Naive thymus-derived CD4-positive, alpha-beta T cell (primary cell): ENCODE measurements at regions of chr2 and their contacts with region 1.

Region 1: DNA sequence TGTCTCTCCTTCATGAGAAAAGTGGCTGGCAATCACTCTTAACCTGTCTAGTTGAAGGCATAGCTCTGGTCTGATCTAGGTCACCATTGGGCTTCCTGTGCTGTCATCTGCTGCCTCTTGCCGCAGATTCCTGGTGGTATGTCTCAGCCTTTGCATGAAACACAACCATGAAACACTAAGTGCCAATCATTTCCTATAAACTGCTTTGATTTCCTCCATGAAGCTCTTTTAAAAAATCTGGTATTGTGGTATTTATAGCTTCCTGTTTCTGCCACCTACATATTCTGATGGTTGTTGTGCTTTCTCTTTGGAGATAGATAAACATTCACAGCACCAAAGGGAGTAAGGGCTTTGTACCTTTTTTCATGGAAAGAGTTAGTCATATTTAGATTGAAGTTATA is 120.0 kb upstream of the EPC2 start:
- DNase-seq: peak in 8 of 9 donors; percentile 44 to 93 (median 86)
- ATAC-seq: peak; percentile 94
- H3K4me3 ChIP-seq: peak overlapping the region; percentile 28
- H3K4me3 Mint-ChIP-seq: peak overlapping the region; percentile 56 to 92 (median 76)
- H3K27ac ChIP-seq: peak overlapping the region; percentile 56
- H3K27ac Mint-ChIP-seq: peak overlapping the region; percentile 85 to 98 (median 94)
- H3K4me1 ChIP-seq: peaks cover 46 to 75% of the 10 kb centered on the region in 2 donors
- H3K4me1 Mint-ChIP-seq: peaks cover 58 to 90% (median 88%) of the 10 kb centered on the region in 7 donors
- H3K27me3 ChIP-seq: no peaks in the 10 kb centered on the region
- H3K27me3 Mint-ChIP-seq: no peaks in the 10 kb centered on the region

Region 2: DNA sequence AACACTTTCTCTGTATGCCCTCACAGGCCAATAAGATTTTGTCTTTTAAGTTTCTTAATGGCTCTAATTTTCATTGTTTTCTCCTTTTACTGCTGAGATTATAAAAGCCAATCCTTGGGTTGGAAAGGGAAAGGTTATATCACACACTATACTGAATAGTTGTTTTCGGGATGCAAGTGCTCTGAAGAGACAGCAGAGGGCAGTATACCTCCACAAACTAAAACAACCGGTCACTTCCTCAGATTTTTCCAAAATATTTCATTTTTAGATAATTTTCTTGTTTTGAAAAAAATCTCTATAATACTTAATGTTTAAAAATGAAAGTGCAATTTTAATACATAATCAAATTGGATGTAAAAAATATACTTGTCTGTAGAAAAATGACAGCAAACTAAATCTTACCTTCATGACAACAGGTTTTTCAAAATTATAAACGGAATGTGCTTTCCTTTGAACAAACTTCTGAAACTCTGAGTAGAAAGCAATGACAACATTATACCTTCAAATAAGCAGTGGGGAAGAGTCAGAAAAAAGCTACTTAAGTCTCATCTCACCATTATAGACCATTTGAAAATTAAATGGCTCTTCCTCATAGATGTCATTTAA is 586.7 kb before region 1 on chr2:
- CTCF ChIA-PET with region 1: interaction called, 3 read pairs
- POLR2A ChIA-PET with region 1: no interaction called
- intact Hi-C with region 1: loop called in 1 of 2 experiments (anchors 5 kb)
- DNase-seq: peak in 5 of 9 donors; percentile 25 to 40 (median 34)
- ATAC-seq: peak; percentile 79
- H3K4me3 ChIP-seq: no peak overlapping the region
- H3K4me3 Mint-ChIP-seq: no peak overlapping the region
- H3K27ac ChIP-seq: no peak overlapping the region
- H3K27ac Mint-ChIP-seq: peak overlapping the region in 4 of 9 donors; percentile 26 to 75 (median 42)
- H3K4me1 ChIP-seq: no peaks in the 10 kb centered on the region
- H3K4me1 Mint-ChIP-seq: peaks cover 0 to 2% (median 0%) of the 10 kb centered on the region in 7 donors
- H3K27me3 ChIP-seq: no peaks in the 10 kb centered on the region
- H3K27me3 Mint-ChIP-seq: no peaks in the 10 kb centered on the region

Region 3: GRCh38 chr2:148540022-148540421 is 15.5 kb after region 1 on chr2:
- CTCF ChIA-PET with region 1: interaction called, 6 read pairs
- POLR2A ChIA-PET with region 1: interaction called, 38 read pairs
- intact Hi-C with region 1: loop called (anchors 1 to 2 kb)
- DNase-seq: peak in 4 of 9 donors; percentile 32 to 42 (median 40)
- ATAC-seq: peak; percentile 60
- H3K4me3 ChIP-seq: peak overlapping the region; percentile 10
- H3K4me3 Mint-ChIP-seq: peak overlapping the region; percentile 47 to 78 (median 60)
- H3K27ac ChIP-seq: no peak overlapping the region
- H3K27ac Mint-ChIP-seq: peak overlapping the region; percentile 48 to 93 (median 89)
- H3K4me1 ChIP-seq: peaks cover 0 to 28% of the 10 kb centered on the region in 2 donors
- H3K4me1 Mint-ChIP-seq: peaks cover 21 to 77% (median 59%) of the 10 kb centered on the region in 7 donors
- H3K27me3 ChIP-seq: no peaks in the 10 kb centered on the region
- H3K27me3 Mint-ChIP-seq: peaks cover 0 to 4% (median 0%) of the 10 kb centered on the region in 5 donors

Region 4: DNA sequence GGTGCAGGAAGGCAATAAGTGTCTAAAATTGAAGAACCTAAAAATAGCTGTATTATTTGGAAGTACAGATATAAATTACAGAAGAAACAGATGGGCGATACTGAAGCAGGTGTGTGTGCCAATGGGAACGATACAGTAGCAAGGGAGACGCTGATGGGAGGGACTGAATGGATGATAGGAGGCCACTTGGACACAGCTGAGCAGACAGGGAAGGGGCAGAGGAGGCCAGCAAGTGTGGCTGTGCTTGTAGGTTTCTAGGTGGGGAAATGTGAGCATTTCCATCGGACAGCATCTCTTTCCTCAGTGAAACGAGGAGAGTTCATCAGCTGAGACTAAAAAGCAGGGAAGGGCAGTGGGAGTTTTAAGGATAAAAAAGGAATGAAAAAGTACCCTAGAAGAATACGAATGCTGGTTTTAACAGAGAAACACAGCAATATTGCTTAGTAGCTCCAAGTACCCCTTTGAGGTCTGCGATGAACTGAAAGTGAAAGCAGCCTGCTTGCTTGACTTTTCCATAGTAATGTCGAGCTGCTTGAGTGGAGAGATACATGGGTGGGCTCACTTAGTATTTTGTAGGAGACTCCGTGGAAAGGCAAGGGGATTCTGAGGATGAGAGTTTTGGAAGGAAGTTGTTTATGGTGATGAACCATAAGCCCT is 28.3 kb after region 1 on chr2:
- CTCF ChIA-PET with region 1: interaction called, 5 read pairs
- POLR2A ChIA-PET with region 1: interaction called, 32 read pairs
- intact Hi-C with region 1: loop called (anchors 1 kb)
- DNase-seq: peak in 7 of 9 donors; percentile 18 to 64 (median 53)
- ATAC-seq: peak; percentile 77
- H3K4me3 ChIP-seq: peak overlapping the region; percentile 75
- H3K4me3 Mint-ChIP-seq: no peak overlapping the region
- H3K27ac ChIP-seq: peak overlapping the region; percentile 70
- H3K27ac Mint-ChIP-seq: no peak overlapping the region
- H3K4me1 ChIP-seq: peaks cover 5 to 12% of the 10 kb centered on the region in 2 donors
- H3K4me1 Mint-ChIP-seq: peaks cover 1 to 13% (median 7%) of the 10 kb centered on the region in 7 donors
- H3K27me3 ChIP-seq: no peaks in the 10 kb centered on the region
- H3K27me3 Mint-ChIP-seq: no peaks in the 10 kb centered on the region

Region 5: GRCh38 chr2:148614322-148615049 is 90.0 kb after region 1 on chr2:
- CTCF ChIA-PET with region 1: no interaction called
- POLR2A ChIA-PET with region 1: no interaction called
- intact Hi-C with region 1: loop called in 1 of 2 experiments (anchors 5 kb)
- DNase-seq: no peak
- ATAC-seq: peak; percentile 70
- H3K4me3 ChIP-seq: no peak overlapping the region
- H3K4me3 Mint-ChIP-seq: peak overlapping the region in 1 of 10 donors; percentile 43
- H3K27ac ChIP-seq: no peak overlapping the region
- H3K27ac Mint-ChIP-seq: peak overlapping the region in 3 of 9 donors; percentile 7 to 73 (median 60)
- H3K4me1 ChIP-seq: no peaks in the 10 kb centered on the region
- H3K4me1 Mint-ChIP-seq: peaks cover 4 to 15% (median 7%) of the 10 kb centered on the region in 7 donors
- H3K27me3 ChIP-seq: no peaks in the 10 kb centered on the region
- H3K27me3 Mint-ChIP-seq: peaks cover 0 to 3% (median 0%) of the 10 kb centered on the region in 5 donors

Region 6: DNA sequence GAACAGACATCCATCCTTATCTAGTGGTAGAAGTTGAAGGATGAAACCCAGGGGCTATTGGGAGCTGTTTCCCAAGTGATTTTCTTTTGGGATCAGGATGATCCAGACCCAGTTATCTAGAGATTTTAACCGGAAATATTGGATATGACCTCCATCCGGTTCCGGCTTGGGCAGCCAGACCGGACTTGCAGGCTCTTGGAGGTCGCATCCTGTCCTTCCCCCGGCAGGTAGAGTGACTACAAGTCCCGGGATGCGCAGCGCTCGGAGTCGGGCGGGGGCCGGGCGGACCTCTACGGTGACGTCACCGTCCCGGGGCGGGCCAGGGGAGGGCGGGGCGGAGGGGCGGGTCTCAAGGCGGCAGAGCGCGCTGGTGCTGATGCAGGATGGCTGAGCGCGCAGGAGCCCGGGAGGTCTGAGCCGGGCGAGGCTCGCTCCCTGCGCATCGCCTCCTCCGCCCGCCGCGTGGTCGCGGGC is 350.4 kb after region 1 on chr2 and contains the start of gene KIF5C:
- CTCF ChIA-PET with region 1: no interaction called
- POLR2A ChIA-PET with region 1: interaction called, 3 read pairs
- intact Hi-C with region 1: loop called (anchors 2 to 10 kb)
- DNase-seq: peak; percentile 67 to 83 (median 76)
- ATAC-seq: peak; percentile 95
- H3K4me3 ChIP-seq: peak within 1 kb of the TSS; percentile 45
- H3K4me3 Mint-ChIP-seq: peak within 1 kb of the TSS; percentile 77 to 89 (median 86)
- H3K27ac ChIP-seq: no peak within 1 kb of the TSS
- H3K27ac Mint-ChIP-seq: peak within 1 kb of the TSS in 6 of 9 donors; percentile 4 to 82 (median 72)
- H3K4me1 ChIP-seq: peaks cover 5 to 6% of the 10 kb centered on the region in 2 donors
- H3K4me1 Mint-ChIP-seq: peaks cover 0 to 19% (median 14%) of the 10 kb centered on the region in 7 donors
- H3K27me3 ChIP-seq: no peaks in the 10 kb centered on the region
- H3K27me3 Mint-ChIP-seq: peaks cover 8 to 33% (median 28%) of the 10 kb centered on the region in 5 donors
- total RNA-seq, gene KIF5C: 3.6 to 14.3 (median 6.8) TPM